CD4-positive, alpha-beta memory T cell (primary cell): ENCODE measurements at regions of chr1 and their contacts with region 1.

Region 1: GRCh38 chr1:23098463-23099170 is 70.0 kb downstream of the LUZP1 start:
- DNase-seq: peak; percentile 65 to 72 (median 67)
- H3K4me3 ChIP-seq: no peak overlapping the region
- H3K4me3 Mint-ChIP-seq: peak overlapping the region in 6 of 8 donors; percentile 33 to 66 (median 40)
- H3K27ac ChIP-seq: no peak overlapping the region
- H3K27ac Mint-ChIP-seq: peak overlapping the region in 6 of 7 donors; percentile 57 to 89 (median 83)
- H3K4me1 ChIP-seq: peaks cover 49% of the 10 kb centered on the region
- H3K4me1 Mint-ChIP-seq: peaks cover 32 to 56% (median 44%) of the 10 kb centered on the region in 4 donors
- H3K27me3 ChIP-seq: no peaks in the 10 kb centered on the region
- H3K27me3 Mint-ChIP-seq: no peaks in the 10 kb centered on the region

Region 2: GRCh38 chr1:23114424-23115079 is 15.9 kb after region 1 on chr1:
- CTCF ChIA-PET with region 1: interaction called, 62 read pairs
- POLR2A ChIA-PET with region 1: interaction called, 49 read pairs
- intact Hi-C with region 1: loop called (anchors 2 kb)
- DNase-seq: peak in 1 of 5 donors; percentile 12
- H3K4me3 ChIP-seq: no peak overlapping the region
- H3K4me3 Mint-ChIP-seq: peak overlapping the region in 6 of 8 donors; percentile 23 to 66 (median 45)
- H3K27ac ChIP-seq: no peak overlapping the region
- H3K27ac Mint-ChIP-seq: peak overlapping the region; percentile 24 to 87 (median 61)
- H3K4me1 ChIP-seq: peaks cover 93% of the 10 kb centered on the region
- H3K4me1 Mint-ChIP-seq: peaks cover 49 to 91% (median 68%) of the 10 kb centered on the region in 4 donors
- H3K27me3 ChIP-seq: no peaks in the 10 kb centered on the region
- H3K27me3 Mint-ChIP-seq: no peaks in the 10 kb centered on the region

Region 3: GRCh38 chr1:23149114-23149513 is 50.5 kb after region 1 on chr1:
- CTCF ChIA-PET with region 1: interaction called, 4 read pairs
- POLR2A ChIA-PET with region 1: interaction called, 3 read pairs
- intact Hi-C with region 1: loop called (anchors 5 kb)
- DNase-seq: no peak
- H3K4me3 ChIP-seq: no peak overlapping the region
- H3K4me3 Mint-ChIP-seq: peak overlapping the region in 2 of 8 donors; percentile 15 to 24
- H3K27ac ChIP-seq: no peak overlapping the region
- H3K27ac Mint-ChIP-seq: peak overlapping the region in 4 of 7 donors; percentile 14 to 76 (median 22)
- H3K4me1 ChIP-seq: peaks cover 22% of the 10 kb centered on the region
- H3K4me1 Mint-ChIP-seq: peaks cover 28 to 47% (median 40%) of the 10 kb centered on the region in 4 donors
- H3K27me3 ChIP-seq: no peaks in the 10 kb centered on the region
- H3K27me3 Mint-ChIP-seq: no peaks in the 10 kb centered on the region

Region 4: GRCh38 chr1:23168457-23169194 is 70.0 kb after region 1 on chr1 and contains the start of gene LUZP1:
- CTCF ChIA-PET with region 1: interaction called, 14 read pairs
- POLR2A ChIA-PET with region 1: interaction called, 31 read pairs
- intact Hi-C with region 1: loop called (anchors 1 kb)
- DNase-seq: peak; percentile 77 to 87 (median 80)
- H3K4me3 ChIP-seq: peak within 1 kb of the TSS; percentile 72 to 76
- H3K4me3 Mint-ChIP-seq: peak within 1 kb of the TSS; percentile 95 to 98 (median 97)
- H3K27ac ChIP-seq: peak within 1 kb of the TSS; percentile 73
- H3K27ac Mint-ChIP-seq: peak within 1 kb of the TSS; percentile 88 to 98 (median 96)
- H3K4me1 ChIP-seq: peaks cover 23% of the 10 kb centered on the region
- H3K4me1 Mint-ChIP-seq: peaks cover 19 to 51% (median 32%) of the 10 kb centered on the region in 4 donors
- H3K27me3 ChIP-seq: no peaks in the 10 kb centered on the region
- H3K27me3 Mint-ChIP-seq: no peaks in the 10 kb centered on the region
- total RNA-seq, gene LUZP1: 24.7 to 27.9 TPM

Region 5: GRCh38 chr1:23184212-23184934 is 85.8 kb after region 1 on chr1:
- CTCF ChIA-PET with region 1: interaction called, 694 read pairs
- POLR2A ChIA-PET with region 1: interaction called, 71 read pairs
- intact Hi-C with region 1: loop called (anchors 1 kb)
- DNase-seq: peak; percentile 44 to 64 (median 54)
- H3K4me3 ChIP-seq: peak overlapping the region in 1 of 2 donors; percentile 35
- H3K4me3 Mint-ChIP-seq: peak overlapping the region; percentile 66 to 86 (median 78)
- H3K27ac ChIP-seq: no peak overlapping the region
- H3K27ac Mint-ChIP-seq: peak overlapping the region in 6 of 7 donors; percentile 19 to 81 (median 62)
- H3K4me1 ChIP-seq: peaks cover 11% of the 10 kb centered on the region
- H3K4me1 Mint-ChIP-seq: peaks cover 8 to 18% (median 11%) of the 10 kb centered on the region in 4 donors
- H3K27me3 ChIP-seq: no peaks in the 10 kb centered on the region
- H3K27me3 Mint-ChIP-seq: peaks cover 0 to 1% of the 10 kb centered on the region in 2 donors